Cardiac septum (tissue), 1 donor: ENCODE measurements at regions of chr2 and their contacts with region 1.

Region 1: GRCh38 chr2:69177785-69178636 is 165.0 kb downstream of the ANTXR1 start:
- DNase-seq: peak; percentile 96

Region 2: DNA sequence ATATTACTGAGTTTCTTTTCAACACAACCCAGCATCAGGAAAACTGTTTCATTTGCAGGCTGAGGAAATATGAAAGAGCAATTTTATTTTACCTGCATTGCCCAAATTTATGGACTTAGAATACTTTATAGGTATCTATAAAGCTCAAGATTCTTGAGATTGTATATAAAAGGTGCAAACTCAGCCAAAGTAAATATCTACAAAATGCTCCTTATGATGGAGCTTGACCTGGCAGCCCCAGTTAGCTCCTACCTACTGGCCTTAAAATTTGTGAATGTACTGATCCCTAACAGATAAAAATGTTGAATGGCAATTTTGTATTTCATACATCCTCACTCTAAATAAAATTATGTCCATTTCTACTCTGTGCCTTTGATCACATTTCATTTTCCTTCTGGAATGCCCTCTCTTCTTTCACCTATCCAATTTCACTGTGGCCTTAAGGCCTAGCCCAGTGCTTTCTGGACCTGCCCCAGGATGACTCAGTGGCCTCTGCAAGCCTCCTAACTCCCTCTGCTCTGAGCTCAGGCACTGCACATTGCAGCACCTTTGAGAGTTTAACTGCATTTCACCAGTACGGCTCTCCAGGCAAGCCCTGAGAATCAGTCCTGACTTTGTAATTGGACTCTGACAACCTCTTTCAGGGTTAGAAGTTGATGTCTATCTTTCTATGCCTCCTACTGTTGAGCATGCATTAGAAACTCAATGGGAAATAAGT is 39.1 kb before region 1 on chr2:
- intact Hi-C with region 1: no loop called
- DNase-seq: no peak

Region 3: DNA sequence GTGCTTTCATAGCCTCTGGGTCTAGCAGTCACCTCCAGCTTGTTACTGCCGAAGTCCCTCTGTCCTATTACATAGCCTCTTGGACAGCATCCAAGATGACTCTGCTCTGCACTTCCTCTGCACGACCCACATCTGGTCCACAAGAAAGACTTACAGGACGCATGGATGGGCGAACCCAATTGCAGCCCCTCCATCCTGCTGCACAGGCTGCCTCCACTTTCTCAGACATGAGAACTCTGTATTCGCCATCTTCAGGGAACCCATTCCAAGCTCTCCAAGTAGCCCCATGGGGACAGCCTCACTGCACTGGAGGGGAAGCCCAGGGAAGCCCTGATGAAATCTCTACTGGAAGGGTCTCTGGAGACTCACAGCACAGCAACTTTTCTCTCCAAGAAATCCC is 36.9 kb after region 1 on chr2:
- intact Hi-C with region 1: loop called (anchors 5 kb)
- DNase-seq: no peak